ENCODE measurements at regions of chr11 and their contacts with region 1.

Region 1: DNA sequence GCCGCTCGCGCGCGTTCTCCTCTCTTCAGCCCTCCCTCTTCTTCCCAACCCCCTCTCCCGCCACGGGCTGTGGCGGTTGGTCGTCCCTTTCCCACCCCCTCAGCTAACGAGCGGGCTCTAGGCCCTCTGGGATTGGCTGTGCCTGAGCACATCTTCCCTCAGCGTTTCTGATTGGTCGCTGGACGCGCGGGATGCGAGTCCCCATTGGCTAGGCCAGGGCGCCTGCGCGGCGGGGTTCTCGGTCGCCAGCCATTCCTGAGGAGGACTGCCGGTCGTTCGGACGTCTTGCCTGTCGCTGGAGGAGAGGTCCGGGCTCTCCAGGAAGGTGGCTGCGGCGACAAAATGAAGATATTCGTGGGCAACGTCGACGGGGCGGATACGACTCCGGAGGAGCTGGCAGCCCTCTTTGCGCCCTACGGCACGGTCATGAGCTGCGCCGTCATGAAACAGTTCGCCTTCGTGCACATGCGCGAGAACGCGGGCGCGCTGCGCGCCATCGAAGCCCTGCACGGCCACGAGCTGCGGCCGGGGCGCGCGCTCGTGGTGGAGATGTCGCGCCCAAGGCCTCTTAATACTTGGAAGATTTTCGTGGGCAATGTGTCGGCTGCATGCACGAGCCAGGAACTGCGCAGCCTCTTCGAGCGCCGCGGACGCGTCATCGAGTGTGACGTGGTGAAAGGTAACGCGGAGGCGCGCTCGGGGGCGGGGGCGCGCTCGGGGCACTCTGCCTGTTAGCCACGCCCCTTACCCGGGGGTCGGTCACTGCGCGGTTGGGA is at the start of gene RBM14:
- DNase-seq: peak; percentile 99
- H3K4me3 ChIP-seq: peak within 1 kb of the TSS; percentile 80 to 92 (median 88)
- H3K27ac ChIP-seq: peak within 1 kb of the TSS; percentile 93
- H3K4me1 ChIP-seq: peaks cover 14% of the 10 kb centered on the region
- H3K27me3 ChIP-seq: no peaks in the 10 kb centered on the region
- CTCF ChIP-seq: no peak
- total RNA-seq, gene RBM14: 20.0 to 79.3 TPM

Region 2: DNA sequence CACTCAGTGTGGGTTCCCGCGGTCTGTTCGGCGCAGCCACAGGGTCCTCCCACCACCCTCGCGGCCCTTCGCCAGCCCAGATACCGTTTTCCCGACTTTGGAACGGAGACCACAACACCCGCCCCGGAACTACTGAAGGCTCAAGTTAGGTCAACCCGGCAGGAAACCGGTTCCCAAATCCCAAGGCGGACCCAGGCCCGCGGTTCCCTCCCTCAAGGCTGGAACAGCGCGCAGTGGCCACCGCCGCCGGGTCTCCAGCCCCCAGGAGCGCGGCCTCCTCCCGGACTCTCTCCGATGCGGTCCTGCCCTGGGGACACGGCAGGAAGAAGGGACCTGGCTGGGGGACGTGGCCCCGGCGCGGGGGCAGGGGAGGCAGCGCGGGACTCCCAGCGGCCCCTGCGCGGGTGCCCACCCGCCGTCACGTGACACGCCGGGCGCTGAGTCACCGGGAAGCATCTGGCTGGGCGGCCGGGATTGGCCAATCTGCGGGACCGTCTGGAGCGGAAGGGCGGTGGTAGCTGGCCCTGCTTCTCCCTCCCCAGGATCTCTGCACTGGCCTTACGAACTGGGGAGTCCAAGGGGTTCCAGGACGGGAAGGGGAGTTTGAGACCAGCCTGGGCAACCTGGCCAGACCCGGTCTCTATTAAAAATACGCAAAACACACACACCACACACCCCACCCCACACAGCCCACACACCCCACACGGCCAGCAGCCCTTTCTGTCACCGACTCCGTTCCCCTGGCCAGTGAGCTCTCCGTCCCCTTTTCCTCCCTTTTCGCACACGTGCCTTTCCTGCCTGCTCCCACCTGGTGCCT is 1139.2 kb before region 1 on chr11:
- CTCF ChIA-PET with region 1: no interaction called
- dilution Hi-C with region 1: no loop called
- in situ Hi-C with region 1: no loop called
- intact Hi-C with region 1: no loop called
- DNase-seq: peak; percentile 95
- H3K4me3 ChIP-seq: peak overlapping the region; percentile 54 to 76 (median 62)
- H3K27ac ChIP-seq: peak overlapping the region; percentile 95
- H3K4me1 ChIP-seq: peaks cover 56% of the 10 kb centered on the region
- H3K27me3 ChIP-seq: no peaks in the 10 kb centered on the region
- CTCF ChIP-seq: peak in 1 of 2 donors; percentile 5

Region 3: GRCh38 chr11:66421492-66422205 is 194.9 kb before region 1 on chr11:
- CTCF ChIA-PET with region 1: no interaction called
- dilution Hi-C with region 1: no loop called
- in situ Hi-C with region 1: no loop called
- intact Hi-C with region 1: loop called (anchors 5 kb)
- DNase-seq: peak; percentile 71
- H3K4me3 ChIP-seq: no peak overlapping the region
- H3K27ac ChIP-seq: no peak overlapping the region
- H3K4me1 ChIP-seq: no peaks in the 10 kb centered on the region
- H3K27me3 ChIP-seq: no peaks in the 10 kb centered on the region
- CTCF ChIP-seq: no peak

Region 4: DNA sequence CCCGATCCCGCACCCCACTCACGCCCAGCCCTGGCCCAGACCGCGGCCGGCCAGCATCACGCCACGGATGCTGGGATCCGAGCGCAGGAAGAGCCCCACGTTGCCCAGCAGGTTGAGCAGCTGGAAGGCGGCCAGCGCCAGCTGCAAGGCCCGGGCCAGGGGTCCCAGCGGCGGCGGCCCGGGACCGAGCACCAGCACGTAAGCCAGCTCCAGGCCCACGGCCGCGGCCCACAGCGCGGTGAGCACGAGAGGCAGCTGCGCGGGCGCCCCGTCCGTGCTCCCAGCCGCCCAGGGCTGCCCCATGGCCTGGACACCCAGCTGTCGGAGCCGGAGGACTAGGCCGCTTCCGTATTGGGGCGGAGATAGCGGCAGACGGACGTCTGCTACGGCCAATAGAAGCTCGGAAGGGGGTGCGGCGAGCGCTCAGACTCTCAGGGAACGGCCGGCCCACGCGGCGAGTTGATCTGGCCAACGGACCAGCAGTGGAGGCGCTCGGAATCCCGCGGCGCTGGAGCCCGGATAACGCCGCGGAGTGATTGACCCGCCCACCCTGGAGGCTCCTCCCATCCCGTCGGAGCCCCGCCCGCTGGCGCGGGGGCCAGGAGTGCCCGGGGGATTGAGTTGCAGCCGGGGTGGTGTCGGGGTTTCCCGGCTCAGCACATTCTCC is 70.7 kb before region 1 on chr11 and contains the start of gene ZDHHC24:
- CTCF ChIA-PET with region 1: no interaction called
- dilution Hi-C with region 1: loop called (anchors 5 kb)
- in situ Hi-C with region 1: no loop called
- intact Hi-C with region 1: loop called (anchors 2 kb)
- DNase-seq: peak; percentile 97
- H3K4me3 ChIP-seq: peak within 1 kb of the TSS; percentile 56 to 93 (median 82)
- H3K27ac ChIP-seq: peak within 1 kb of the TSS; percentile 46
- H3K4me1 ChIP-seq: peaks cover 18% of the 10 kb centered on the region
- H3K27me3 ChIP-seq: no peaks in the 10 kb centered on the region
- CTCF ChIP-seq: no peak
- total RNA-seq, gene ZDHHC24: 11.0 to 16.8 TPM

Region 5: DNA sequence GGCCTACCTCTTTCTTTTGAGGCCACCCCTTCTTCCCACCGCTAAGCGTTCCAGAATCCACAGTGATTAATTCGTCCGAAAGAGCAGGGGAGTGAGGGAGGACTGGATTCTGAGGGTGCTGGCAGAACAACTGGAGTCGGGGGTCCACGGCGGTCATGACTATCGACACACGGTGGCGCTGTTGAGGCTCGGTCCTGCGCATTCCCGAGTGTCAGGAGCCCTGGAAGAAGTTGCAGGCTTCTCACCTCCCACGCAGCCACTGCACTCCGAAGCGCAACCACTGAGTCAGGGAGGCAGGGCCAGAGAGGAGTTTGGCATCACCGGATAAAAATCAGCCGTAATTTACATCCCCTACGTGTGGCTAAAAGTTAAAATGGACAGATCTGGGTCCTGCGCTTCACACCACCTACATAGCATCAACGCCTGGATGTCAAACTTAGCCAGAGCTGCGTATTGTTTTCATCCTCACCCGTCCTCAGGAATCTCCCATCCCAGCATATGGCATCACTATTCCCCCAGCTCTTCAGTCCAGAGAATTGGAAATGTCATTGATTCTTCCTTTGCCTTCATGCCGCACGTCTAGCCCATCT is 37.5 kb before region 1 on chr11:
- CTCF ChIA-PET with region 1: no interaction called
- dilution Hi-C with region 1: no loop called
- in situ Hi-C with region 1: no loop called
- intact Hi-C with region 1: loop called (anchors 2 kb)
- DNase-seq: peak; percentile 56
- H3K4me3 ChIP-seq: no peak overlapping the region
- H3K27ac ChIP-seq: no peak overlapping the region
- H3K4me1 ChIP-seq: no peaks in the 10 kb centered on the region
- H3K27me3 ChIP-seq: no peaks in the 10 kb centered on the region
- CTCF ChIP-seq: peak; percentile 68 to 81

Region 6: DNA sequence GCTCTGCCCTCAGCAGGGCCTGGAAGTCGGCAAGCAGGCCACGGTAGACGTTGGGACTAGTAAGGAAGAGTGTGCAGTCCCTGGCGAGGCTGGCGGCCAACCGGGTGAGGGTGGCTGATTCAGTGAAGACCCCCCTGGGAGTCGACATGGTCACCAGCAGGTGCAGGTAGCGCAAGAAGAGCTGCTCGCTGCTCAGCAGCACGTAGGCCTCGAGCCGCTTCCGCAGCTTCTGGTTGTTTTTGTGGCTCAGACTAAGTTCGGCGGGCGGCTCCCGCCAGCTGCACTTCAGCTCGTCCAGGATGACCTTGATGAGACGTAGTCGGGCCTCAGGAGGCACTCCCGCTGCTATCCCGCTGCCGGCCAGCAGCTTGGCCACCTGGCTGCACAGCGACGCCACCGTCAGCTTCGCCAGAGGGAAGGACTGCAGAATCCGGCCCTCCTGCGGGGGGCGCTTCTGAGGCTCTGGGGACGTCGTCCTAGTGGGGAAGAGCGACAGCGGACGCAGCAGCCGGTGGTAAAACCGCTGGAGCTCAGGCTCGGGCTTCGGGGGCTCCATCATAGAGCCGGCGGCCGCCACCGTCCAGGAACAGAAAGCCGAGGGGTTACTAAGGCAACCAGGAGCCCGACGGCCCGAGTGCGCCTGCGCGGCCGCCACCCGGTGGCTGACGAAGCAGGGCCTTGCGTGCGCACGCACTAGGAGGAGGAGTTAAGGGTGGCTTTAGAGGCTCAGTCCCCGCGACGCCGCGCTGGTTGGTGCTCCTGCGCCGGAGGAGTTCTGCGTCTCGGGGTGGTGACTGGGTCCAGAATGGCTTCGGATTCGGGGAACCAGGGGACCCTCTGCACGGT is 23.9 kb before region 1 on chr11 and contains the starts of genes CCDC87 and CCS:
- CTCF ChIA-PET with region 1: interaction called, 6 read pairs
- dilution Hi-C with region 1: no loop called
- in situ Hi-C with region 1: no loop called
- intact Hi-C with region 1: loop called (anchors 2 kb)
- DNase-seq: peak; percentile 92
- H3K4me3 ChIP-seq: peak within 1 kb of the TSS; percentile 45 to 78 (median 73)
- H3K27ac ChIP-seq: peak within 1 kb of the TSS; percentile 65
- H3K4me1 ChIP-seq: peaks cover 8% of the 10 kb centered on the region
- H3K27me3 ChIP-seq: no peaks in the 10 kb centered on the region
- CTCF ChIP-seq: peak; percentile 47 to 72
- total RNA-seq, gene CCDC87: 0.31 to 0.83 TPM
- total RNA-seq, gene CCS: 21.3 to 31.2 TPM

Region 7: GRCh38 chr11:66638177-66639065 is 21.9 kb after region 1 on chr11 and contains the start of gene RBM4:
- CTCF ChIA-PET with region 1: no interaction called
- dilution Hi-C with region 1: no loop called
- in situ Hi-C with region 1: no loop called
- intact Hi-C with region 1: loop called (anchors 1 kb)
- DNase-seq: peak; percentile 100
- H3K4me3 ChIP-seq: peak within 1 kb of the TSS; percentile 87 to 90 (median 89)
- H3K27ac ChIP-seq: peak within 1 kb of the TSS; percentile 87
- H3K4me1 ChIP-seq: peaks cover 53% of the 10 kb centered on the region
- H3K27me3 ChIP-seq: no peaks in the 10 kb centered on the region
- CTCF ChIP-seq: no peak
- total RNA-seq, gene RBM4: 65.2 to 117 TPM

Region 8: GRCh38 chr11:66665369-66665768 is 48.8 kb after region 1 on chr11:
- CTCF ChIA-PET with region 1: no interaction called
- dilution Hi-C with region 1: no loop called
- in situ Hi-C with region 1: no loop called
- intact Hi-C with region 1: no loop called
- DNase-seq: no peak
- H3K4me3 ChIP-seq: no peak overlapping the region
- H3K27ac ChIP-seq: no peak overlapping the region
- H3K4me1 ChIP-seq: no peaks in the 10 kb centered on the region
- H3K27me3 ChIP-seq: no peaks in the 10 kb centered on the region
- CTCF ChIP-seq: no peak

Region 9: GRCh38 chr11:66677599-66678375 is 61.2 kb after region 1 on chr11 and contains the start of gene RBM4B:
- CTCF ChIA-PET with region 1: interaction called, 8 read pairs
- dilution Hi-C with region 1: no loop called
- in situ Hi-C with region 1: no loop called
- intact Hi-C with region 1: loop called (anchors 2 kb)
- DNase-seq: peak; percentile 89
- H3K4me3 ChIP-seq: peak within 1 kb of the TSS; percentile 51 to 84 (median 75)
- H3K27ac ChIP-seq: peak within 1 kb of the TSS; percentile 93
- H3K4me1 ChIP-seq: peaks cover 18% of the 10 kb centered on the region
- H3K27me3 ChIP-seq: no peaks in the 10 kb centered on the region
- CTCF ChIP-seq: no peak
- total RNA-seq, gene RBM4B: 12.2 to 15.3 TPM